ENCODE measurements at regions of chr15 and their contacts with region 1.

Region 1: GRCh38 chr15:41811432-41812195 is 16.3 kb upstream of the JMJD7 start:
- DNase-seq: peak; percentile 87 to 90
- H3K4me3 ChIP-seq: no peak overlapping the region
- H3K27ac ChIP-seq: no peak overlapping the region
- H3K4me1 ChIP-seq: no peaks in the 10 kb centered on the region
- H3K27me3 ChIP-seq: no peaks in the 10 kb centered on the region
- CTCF ChIP-seq: peak; percentile 88 to 95

Region 2: GRCh38 chr15:41597787-41598186 is 213.8 kb before region 1 on chr15:
- intact Hi-C with region 1: loop called (anchors 10 kb)
- DNase-seq: no peak
- H3K4me3 ChIP-seq: no peak overlapping the region
- H3K27ac ChIP-seq: no peak overlapping the region
- H3K4me1 ChIP-seq: no peaks in the 10 kb centered on the region
- H3K27me3 ChIP-seq: peaks cover 0 to 3% of the 10 kb centered on the region in 2 donors
- CTCF ChIP-seq: no peak

Measured in tibial artery (tissue), 4 donors.